ENCODE measurements at regions of chr4 and their contacts with region 1.

Region 1: DNA sequence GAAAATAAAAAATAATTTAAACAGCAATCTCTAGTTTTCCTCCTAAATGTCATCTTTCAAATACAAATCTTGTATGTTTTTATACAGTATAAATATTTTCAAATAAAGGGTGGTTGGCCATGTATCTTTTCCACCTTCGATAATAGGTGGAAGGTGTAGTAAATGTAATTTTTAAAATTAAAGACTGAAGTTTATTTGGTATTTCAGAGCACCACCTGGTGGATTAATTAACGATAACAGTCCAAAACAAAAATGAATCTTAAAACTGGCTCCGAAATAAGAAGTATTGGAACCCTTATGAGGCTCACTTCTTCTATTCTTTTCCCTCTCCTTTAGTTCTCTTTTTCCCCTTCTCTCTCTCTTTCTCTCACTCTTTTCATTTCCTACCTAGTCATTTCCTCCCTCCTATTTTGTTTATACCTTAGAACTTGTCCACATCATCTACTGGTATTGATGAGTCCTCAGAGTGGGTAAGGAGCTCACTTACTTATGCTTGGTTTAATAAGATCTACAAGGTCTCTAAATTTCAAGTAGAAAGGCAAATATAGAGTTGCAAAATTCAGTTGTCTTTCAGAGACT is 82.9 kb upstream of the EXOC1L start:
- DNase-seq: peak; percentile 24
- CTCF ChIP-seq: peak; percentile 40

Region 2: DNA sequence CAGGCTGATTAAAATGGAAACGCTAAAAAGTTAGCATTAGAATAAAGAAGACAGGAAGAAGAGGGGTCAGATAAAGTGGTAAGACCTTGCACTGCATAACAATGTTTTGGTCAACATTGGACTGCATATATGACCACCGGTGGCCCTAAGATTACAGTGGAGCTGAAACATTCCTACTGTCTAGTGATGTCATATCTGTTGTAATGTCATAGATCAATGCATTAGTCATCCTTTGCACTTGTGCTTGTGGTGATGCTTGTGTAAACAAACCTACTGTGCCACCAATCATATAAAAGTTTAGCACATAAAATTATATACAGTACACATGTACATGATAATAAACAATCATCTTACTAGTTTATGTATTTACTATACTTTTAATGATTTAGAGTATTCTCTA is 268.0 kb before region 1 on chr4:
- in situ Hi-C with region 1: loop called (anchors 25 kb)
- DNase-seq: no peak
- CTCF ChIP-seq: no peak